ENCODE measurements at regions of chr9 and their contacts with region 1.

Region 1: GRCh38 chr9:83327323-83327722 is 210.9 kb downstream of the FRMD3 start:
- DNase-seq: peak; percentile 56
- ATAC-seq: peak; percentile 98
- H3K4me3 ChIP-seq: no peak overlapping the region
- H3K27ac ChIP-seq: peak overlapping the region; percentile 47
- H3K4me1 ChIP-seq: peaks cover 16% of the 10 kb centered on the region
- H3K27me3 ChIP-seq: no peaks in the 10 kb centered on the region
- CTCF ChIP-seq: peak; percentile 57
- EP300 ChIP-seq: no peak
- POLR2A ChIP-seq: no peak
- RAD21 ChIP-seq: no peak

Region 2: GRCh38 chr9:83346655-83347420 is 19.5 kb after region 1 on chr9:
- CTCF ChIA-PET with region 1: no interaction called
- POLR2A ChIA-PET with region 1: no interaction called
- in situ Hi-C with region 1: no loop called
- intact Hi-C with region 1: no loop called
- DNase-seq: no peak
- ATAC-seq: no peak
- H3K4me3 ChIP-seq: no peak overlapping the region
- H3K27ac ChIP-seq: no peak overlapping the region
- H3K4me1 ChIP-seq: no peaks in the 10 kb centered on the region
- H3K27me3 ChIP-seq: no peaks in the 10 kb centered on the region
- CTCF ChIP-seq: no peak
- EP300 ChIP-seq: no peak
- POLR2A ChIP-seq: no peak
- RAD21 ChIP-seq: no peak

Region 3: GRCh38 chr9:83384214-83384613 is 56.9 kb after region 1 on chr9:
- CTCF ChIA-PET with region 1: no interaction called
- POLR2A ChIA-PET with region 1: no interaction called
- in situ Hi-C with region 1: loop called (anchors 10 kb)
- intact Hi-C with region 1: no loop called
- DNase-seq: no peak
- ATAC-seq: no peak
- H3K4me3 ChIP-seq: no peak overlapping the region
- H3K27ac ChIP-seq: no peak overlapping the region
- H3K4me1 ChIP-seq: peaks cover 53% of the 10 kb centered on the region
- H3K27me3 ChIP-seq: no peaks in the 10 kb centered on the region
- CTCF ChIP-seq: no peak
- EP300 ChIP-seq: no peak
- POLR2A ChIP-seq: no peak
- RAD21 ChIP-seq: no peak